HCT116 (cell line): ENCODE measurements at regions of chr18 and their contacts with region 1.

Region 1: DNA sequence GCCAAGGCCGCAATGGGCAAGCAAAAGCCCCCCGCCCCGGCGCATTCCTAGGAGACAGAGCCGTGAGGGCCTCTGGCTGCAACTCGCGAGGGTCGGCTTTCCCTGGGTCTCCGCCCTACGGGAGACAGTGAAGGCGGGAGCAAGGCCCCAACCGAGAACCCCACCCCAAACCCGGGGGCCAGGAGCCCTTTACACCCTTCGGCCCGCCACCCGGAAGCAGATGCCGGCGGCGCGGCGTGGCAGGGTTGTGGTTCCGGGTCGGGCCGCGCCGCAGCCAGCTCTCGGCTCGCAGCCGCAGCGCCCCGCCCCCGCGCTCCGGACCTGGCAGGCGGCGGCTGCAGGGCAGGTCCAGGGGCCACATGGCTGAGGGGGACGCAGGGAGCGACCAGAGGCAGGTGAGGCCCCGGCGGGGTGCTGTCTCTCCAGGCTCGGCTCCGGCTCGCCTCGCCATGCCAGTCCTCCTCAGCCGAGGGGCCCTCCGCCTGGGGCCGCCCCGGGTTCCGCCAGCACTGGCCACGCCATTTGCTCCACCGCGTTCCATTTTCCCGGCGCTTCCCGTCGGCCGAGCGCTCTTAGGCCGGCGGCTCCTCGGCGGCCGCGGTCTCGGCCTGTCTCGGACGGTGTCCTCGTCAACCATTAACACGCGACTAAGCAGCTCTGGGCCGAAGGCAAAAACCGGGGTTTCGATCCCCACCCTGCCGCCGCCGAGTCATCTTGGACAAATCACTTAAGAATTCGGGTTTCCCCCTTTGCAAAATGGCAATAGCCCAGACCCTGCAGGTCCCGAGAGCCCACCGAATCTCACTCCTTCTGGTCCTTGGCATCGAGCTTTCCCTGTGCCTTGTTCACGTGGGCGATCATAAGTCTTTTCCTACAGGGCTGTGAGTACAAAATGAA is at the start of gene IMPACT:
- DNase-seq: peak; percentile 54
- ATAC-seq: peak; percentile 91
- H3K4me3 ChIP-seq: peak within 1 kb of the TSS; percentile 60 to 76
- H3K27ac ChIP-seq: peak within 1 kb of the TSS; percentile 96
- H3K4me1 ChIP-seq: peaks cover 5 to 21% of the 10 kb centered on the region in 2 experiments; a peak in 3 of 4 replicates
- H3K27me3 ChIP-seq: no peaks in the 10 kb centered on the region
- CTCF ChIP-seq: no peak
- POLR2A ChIP-seq: peak; percentile 79
- RAD21 ChIP-seq: no peak
- total RNA-seq, gene IMPACT: 46.4 TPM

Region 2: GRCh38 chr18:24009651-24010333 is 416.9 kb before region 1 on chr18:
- CTCF ChIA-PET with region 1: no interaction called
- POLR2A ChIA-PET with region 1: no interaction called
- RAD21 ChIA-PET with region 1: no interaction called
- intact Hi-C with region 1: no loop called
- DNase-seq: no peak
- ATAC-seq: no peak
- H3K4me3 ChIP-seq: no peak overlapping the region
- H3K27ac ChIP-seq: no peak overlapping the region
- H3K4me1 ChIP-seq: peaks cover 0 to 6% of the 10 kb centered on the region in 2 experiments; a peak in 2 of 4 replicates
- H3K27me3 ChIP-seq: no peaks in the 10 kb centered on the region
- CTCF ChIP-seq: no peak
- POLR2A ChIP-seq: no peak
- RAD21 ChIP-seq: no peak

Region 3: DNA sequence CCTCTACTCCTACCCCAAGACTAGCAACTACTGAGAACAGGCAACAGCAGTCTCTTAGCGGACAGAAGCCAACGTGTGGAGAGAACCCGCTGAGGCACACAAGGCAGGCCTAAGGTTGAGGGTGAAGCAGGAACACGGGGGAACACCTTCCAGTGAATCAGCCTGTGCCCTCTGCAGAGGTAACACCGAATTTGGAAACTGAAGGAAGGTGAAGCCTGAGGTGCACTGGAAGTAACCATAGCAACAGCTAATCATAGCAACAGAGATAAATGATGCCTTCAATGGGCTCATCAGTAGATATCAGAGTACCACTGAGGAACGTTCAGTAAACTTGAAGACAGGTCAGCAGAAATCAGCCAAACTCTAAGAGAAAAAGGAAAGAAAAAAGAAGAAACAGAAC is 72.4 kb before region 1 on chr18:
- CTCF ChIA-PET with region 1: interaction called, 5 read pairs
- POLR2A ChIA-PET with region 1: no interaction called
- RAD21 ChIA-PET with region 1: no interaction called
- intact Hi-C with region 1: loop called (anchors 10 kb)
- DNase-seq: no peak
- ATAC-seq: no peak
- H3K4me3 ChIP-seq: no peak overlapping the region
- H3K27ac ChIP-seq: no peak overlapping the region
- H3K4me1 ChIP-seq: no peaks in the 10 kb centered on the region
- H3K27me3 ChIP-seq: no peaks in the 10 kb centered on the region
- CTCF ChIP-seq: no peak
- POLR2A ChIP-seq: no peak
- RAD21 ChIP-seq: no peak

Region 4: GRCh38 chr18:24397694-24398365 is 28.8 kb before region 1 on chr18 and contains the start of gene OSBPL1A:
- CTCF ChIA-PET with region 1: interaction called, 6 read pairs
- POLR2A ChIA-PET with region 1: interaction called, 4 read pairs
- RAD21 ChIA-PET with region 1: no interaction called
- intact Hi-C with region 1: loop called (anchors 1 kb)
- DNase-seq: peak; percentile 91
- ATAC-seq: peak; percentile 90
- H3K4me3 ChIP-seq: peak within 1 kb of the TSS; percentile 53 to 66
- H3K27ac ChIP-seq: peak within 1 kb of the TSS; percentile 81
- H3K4me1 ChIP-seq: peaks cover 47 to 59% of the 10 kb centered on the region in 2 experiments
- H3K27me3 ChIP-seq: no peaks in the 10 kb centered on the region
- CTCF ChIP-seq: no peak
- POLR2A ChIP-seq: peak; percentile 62
- RAD21 ChIP-seq: no peak
- total RNA-seq, gene OSBPL1A: 18.9 TPM